SK-N-SH (cell line): ENCODE measurements at regions of chr5 and their contacts with region 1.

Region 1: DNA sequence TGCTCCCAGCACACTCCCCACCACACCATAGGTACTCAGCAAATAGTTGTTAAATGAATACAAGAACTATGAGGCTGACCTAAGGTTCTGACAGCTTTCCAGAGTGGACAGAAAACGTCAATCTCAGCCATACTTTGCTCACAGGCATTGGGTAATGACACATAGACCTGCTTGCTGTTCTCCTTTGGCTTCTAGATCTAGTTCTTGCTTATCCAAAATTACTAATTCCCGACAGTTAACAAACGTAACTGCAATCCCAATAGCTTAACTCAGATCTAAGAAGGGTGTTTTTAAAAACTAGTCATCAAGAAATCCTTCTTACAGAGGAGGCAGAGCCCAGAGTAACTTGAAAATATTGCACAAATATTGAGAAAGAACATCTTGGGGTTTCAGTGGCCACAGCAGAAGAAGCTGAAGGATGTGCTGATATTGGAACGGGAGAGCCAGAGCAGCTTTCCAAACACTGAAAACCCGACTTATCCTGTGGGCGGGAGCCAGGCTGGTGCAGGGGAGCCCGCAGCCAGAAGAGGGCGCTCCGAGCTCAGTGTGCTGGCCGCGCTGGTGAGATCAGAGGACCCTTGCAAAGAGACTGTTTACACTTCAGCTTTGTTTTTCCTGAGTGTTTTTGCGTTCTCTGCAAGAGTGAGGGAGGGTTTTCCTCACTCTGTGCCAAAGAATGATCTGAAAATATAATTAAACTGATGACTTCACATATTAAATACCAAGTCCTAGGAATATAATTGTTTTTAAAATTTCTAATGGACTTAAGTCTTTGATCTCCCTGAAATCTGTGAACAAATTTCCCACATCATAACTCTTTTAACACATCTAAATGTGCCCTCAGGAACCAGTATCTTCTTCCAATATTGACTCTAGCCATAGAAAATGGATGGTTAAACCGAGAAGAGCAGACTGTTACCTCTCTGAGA is 30.3 kb downstream of the FGF1 start:
- DNase-seq: peak; percentile 91
- H3K4me3 ChIP-seq: no peak overlapping the region; a peak in 1 of 4 replicates
- H3K27ac ChIP-seq: no peak overlapping the region; a peak in 1 of 4 replicates
- H3K4me1 ChIP-seq: peaks cover 4 to 5% of the 10 kb centered on the region in 2 experiments; a peak in 2 of 4 replicates
- H3K27me3 ChIP-seq: no peaks in the 10 kb centered on the region
- CTCF ChIP-seq: peak; percentile 99
- EP300 ChIP-seq: no peak
- RAD21 ChIP-seq: peak; percentile 99

Region 2: DNA sequence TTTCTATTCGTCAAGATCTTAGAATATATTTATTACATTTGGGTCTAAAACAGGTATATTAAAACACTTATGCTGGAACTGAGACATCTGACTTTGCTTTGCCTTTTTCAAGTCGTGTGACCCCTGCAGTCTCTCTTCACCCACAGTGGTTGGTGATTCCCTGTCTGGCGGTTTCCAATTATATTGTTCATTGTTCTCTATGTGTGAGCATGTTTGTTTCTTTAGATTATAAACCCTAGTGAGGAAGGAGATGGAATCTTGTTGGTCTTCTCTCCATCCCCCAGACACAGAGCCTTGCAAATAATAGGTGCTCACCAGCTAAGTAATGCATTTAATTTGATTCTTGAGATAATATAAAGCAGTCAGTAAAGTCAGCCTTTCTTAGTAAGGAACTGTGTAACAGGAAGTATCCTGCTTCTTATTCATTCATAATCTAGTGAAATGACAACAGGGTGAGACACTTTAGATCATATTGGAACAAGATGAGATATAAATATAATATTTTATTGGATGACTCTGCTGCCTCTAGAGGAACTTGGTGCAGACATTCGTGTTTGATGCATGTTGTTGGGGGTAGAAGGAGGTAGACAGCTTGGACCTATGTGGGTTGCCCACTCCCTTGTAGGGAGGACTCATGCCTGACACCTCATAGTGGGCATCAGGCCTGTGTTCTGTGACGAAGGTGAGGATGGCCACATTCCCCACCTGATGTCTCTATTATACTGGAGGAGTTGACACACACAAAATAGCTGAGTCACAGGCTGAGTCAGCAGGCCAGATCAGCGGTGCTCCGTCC is 57.9 kb before region 1 on chr5:
- CTCF ChIA-PET with region 1: interaction called, 24 read pairs
- POLR2A ChIA-PET with region 1: no interaction called
- DNase-seq: no peak
- H3K4me3 ChIP-seq: 0 out of 4 replicates have a peak overlapping the region, but pooled peaks of 1 of the 2 experiments have one; percentile 13
- H3K27ac ChIP-seq: peak overlapping the region in 1 of 2 experiments; percentile 82; a peak in 3 of 4 replicates
- H3K4me1 ChIP-seq: peaks cover 6 to 17% of the 10 kb centered on the region in 2 experiments; a peak in 2 of 4 replicates
- H3K27me3 ChIP-seq: no peaks in the 10 kb centered on the region
- CTCF ChIP-seq: peak; percentile 54
- EP300 ChIP-seq: no peak
- RAD21 ChIP-seq: no peak

Region 3: GRCh38 chr5:142618130-142618523 is 37.5 kb before region 1 on chr5:
- CTCF ChIA-PET with region 1: interaction called, 77 read pairs
- POLR2A ChIA-PET with region 1: no interaction called
- DNase-seq: no peak
- H3K4me3 ChIP-seq: no peak overlapping the region
- H3K27ac ChIP-seq: peak overlapping the region in 1 of 2 experiments; percentile 52; a peak in 2 of 4 replicates
- H3K4me1 ChIP-seq: peaks cover 2 to 31% of the 10 kb centered on the region in 2 experiments; a peak in 3 of 4 replicates
- H3K27me3 ChIP-seq: no peaks in the 10 kb centered on the region
- CTCF ChIP-seq: no peak
- EP300 ChIP-seq: no peak; a peak in 1 of 4 replicates
- RAD21 ChIP-seq: no peak

Region 4: GRCh38 chr5:142669477-142669876 is 13.9 kb after region 1 on chr5:
- CTCF ChIA-PET with region 1: interaction called, 60 read pairs
- POLR2A ChIA-PET with region 1: no interaction called
- DNase-seq: no peak
- H3K4me3 ChIP-seq: no peak overlapping the region
- H3K27ac ChIP-seq: no peak overlapping the region
- H3K4me1 ChIP-seq: peaks cover 8 to 17% of the 10 kb centered on the region in 2 experiments; a peak in 2 of 4 replicates
- H3K27me3 ChIP-seq: no peaks in the 10 kb centered on the region
- CTCF ChIP-seq: no peak
- EP300 ChIP-seq: no peak
- RAD21 ChIP-seq: no peak

Region 5: DNA sequence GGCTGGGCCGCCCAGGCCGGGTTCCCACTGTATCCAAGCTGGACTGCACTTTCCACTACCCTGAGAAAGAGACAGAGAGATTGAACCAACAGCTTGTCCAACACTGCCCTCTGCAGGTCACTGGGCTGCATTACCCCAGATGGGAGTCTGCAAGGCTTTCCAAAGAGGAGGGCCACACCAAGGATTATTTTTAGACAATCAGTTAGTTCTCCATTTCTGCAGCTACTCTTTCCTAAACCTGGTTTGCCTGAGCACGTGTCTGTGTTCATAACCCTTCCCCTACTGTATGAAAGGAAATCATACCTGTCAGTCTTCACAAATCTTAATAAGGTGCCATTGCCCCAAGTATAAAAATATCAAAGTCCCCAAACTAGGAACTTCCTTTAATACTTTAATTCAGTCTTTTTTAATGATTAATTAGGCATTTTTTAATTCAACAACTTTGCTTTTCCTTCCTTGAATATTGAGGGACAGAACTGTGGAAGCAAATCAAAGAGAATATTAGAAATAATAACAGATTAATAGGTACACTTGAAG is 43.6 kb after region 1 on chr5:
- CTCF ChIA-PET with region 1: interaction called, 668 read pairs
- POLR2A ChIA-PET with region 1: interaction called, 20 read pairs
- DNase-seq: peak; percentile 74
- H3K4me3 ChIP-seq: no peak overlapping the region; a peak in 1 of 4 replicates
- H3K27ac ChIP-seq: no peak overlapping the region
- H3K4me1 ChIP-seq: peaks cover 23 to 28% of the 10 kb centered on the region in 2 experiments
- H3K27me3 ChIP-seq: no peaks in the 10 kb centered on the region
- CTCF ChIP-seq: peak; percentile 95
- EP300 ChIP-seq: no peak
- RAD21 ChIP-seq: peak; percentile 100

Region 6: DNA sequence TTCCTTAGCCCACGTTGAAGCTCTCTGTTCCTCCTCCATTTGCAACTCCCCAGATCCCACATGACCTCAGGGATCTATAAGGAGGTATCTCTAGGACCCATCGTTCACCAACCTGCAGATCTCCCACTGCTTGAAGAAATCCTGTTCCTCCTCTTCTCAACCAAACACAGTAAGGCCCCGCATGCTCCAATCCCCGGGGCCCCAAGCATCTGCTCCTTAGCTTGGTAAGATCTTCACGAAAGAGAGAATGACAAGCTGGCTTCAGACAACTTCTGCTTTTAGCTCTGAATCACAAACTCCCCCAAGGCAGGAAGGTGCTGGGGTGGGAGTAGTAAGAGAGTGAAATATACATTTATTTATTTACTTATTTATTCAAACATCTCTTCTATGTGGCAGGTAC is 81.6 kb after region 1 on chr5:
- CTCF ChIA-PET with region 1: no interaction called
- POLR2A ChIA-PET with region 1: no interaction called
- DNase-seq: no peak
- H3K4me3 ChIP-seq: no peak overlapping the region
- H3K27ac ChIP-seq: no peak overlapping the region
- H3K4me1 ChIP-seq: peaks cover 15 to 20% of the 10 kb centered on the region in 2 experiments; a peak in 3 of 4 replicates
- H3K27me3 ChIP-seq: no peaks in the 10 kb centered on the region
- CTCF ChIP-seq: no peak
- EP300 ChIP-seq: no peak
- RAD21 ChIP-seq: no peak

Region 7: DNA sequence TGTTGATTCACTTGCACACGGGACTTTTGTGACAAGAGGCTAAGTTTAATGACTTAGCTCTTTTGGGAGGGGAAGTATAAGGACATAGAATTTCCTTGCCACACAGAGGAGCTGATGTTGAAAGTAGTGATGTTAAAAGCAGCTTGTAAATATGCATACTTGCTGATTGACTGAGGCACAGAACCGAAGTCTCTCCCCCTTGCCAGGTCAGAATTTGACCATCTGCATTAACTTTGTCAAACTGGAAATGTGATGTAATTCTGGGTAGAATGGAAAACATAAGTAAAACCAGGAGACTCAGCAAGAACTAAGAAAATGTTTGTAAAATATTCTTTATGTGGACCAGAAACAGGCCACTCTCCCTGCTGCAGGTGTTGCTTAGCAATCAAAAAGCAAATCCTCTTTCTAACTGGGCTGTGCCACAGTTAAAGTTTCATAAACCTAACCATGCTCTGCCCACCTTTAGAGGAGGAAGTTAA is 463.7 kb after region 1 on chr5:
- CTCF ChIA-PET with region 1: no interaction called
- POLR2A ChIA-PET with region 1: no interaction called
- DNase-seq: no peak
- H3K4me3 ChIP-seq: no peak overlapping the region
- H3K27ac ChIP-seq: no peak overlapping the region
- H3K4me1 ChIP-seq: peaks cover 0 to 1% of the 10 kb centered on the region in 2 experiments; a peak in 1 of 4 replicates
- H3K27me3 ChIP-seq: no peaks in the 10 kb centered on the region
- CTCF ChIP-seq: no peak
- EP300 ChIP-seq: no peak
- RAD21 ChIP-seq: no peak